Right lobe of liver (tissue), 6 donors: ENCODE measurements at regions of chr11 and their contacts with region 1.

Region 1: DNA sequence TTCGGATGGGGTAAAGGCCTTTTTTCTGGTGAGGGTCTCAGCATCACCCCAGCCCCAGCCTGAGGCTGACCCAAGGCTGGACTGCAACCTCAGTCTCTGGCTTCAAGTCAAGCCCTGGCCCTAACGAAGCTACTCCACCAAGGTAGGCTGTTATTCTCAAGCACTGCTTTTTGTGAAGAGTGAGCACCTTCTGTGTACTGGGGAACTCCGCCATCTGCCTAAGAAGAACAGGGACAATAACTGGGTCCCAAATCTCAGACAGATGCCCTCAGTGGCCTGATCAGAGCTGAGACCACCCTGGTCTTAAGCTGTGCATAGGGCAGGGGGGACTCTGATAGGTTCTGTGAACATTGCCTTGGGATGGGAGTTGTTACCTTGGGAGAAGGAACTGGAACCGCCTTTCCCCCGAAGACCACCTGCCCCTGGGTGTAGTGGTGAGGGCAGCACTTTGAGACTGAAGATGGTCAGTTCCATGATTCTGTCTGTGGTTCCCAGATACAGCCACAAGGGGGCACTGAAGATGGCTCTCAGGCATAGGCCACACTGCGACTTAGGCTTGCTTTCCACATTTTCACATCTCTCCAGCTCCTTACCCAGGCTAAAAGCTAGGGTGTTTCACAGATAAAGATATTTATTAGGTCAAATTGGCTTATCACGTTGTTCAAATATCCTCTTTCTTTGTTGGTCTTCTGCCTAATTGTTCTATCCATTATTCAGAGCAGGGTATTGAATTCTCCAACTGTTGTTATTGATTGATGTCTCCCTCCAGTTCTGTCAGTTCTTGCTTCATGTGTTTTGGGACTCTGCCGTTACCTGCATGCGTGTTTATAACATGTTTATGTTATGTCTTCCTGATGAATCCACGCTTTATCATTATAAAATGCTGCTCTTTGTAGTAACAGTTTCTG is 11.8 kb upstream of the UVRAG start:
- DNase-seq: peak in 2 of 3 donors; percentile 55 to 75
- ATAC-seq: peak; percentile 88 to 96 (median 92)
- H3K4me3 ChIP-seq: no peak overlapping the region
- H3K27ac ChIP-seq: no peak overlapping the region
- H3K4me1 ChIP-seq: no peaks in the 10 kb centered on the region
- H3K27me3 ChIP-seq: no peaks in the 10 kb centered on the region
- CTCF ChIP-seq: peak; percentile 82 to 89 (median 86)
- POLR2A ChIP-seq: no peak

Region 2: GRCh38 chr11:75639762-75640181 is 163.4 kb before region 1 on chr11:
- intact Hi-C with region 1: no loop called
- DNase-seq: peak; percentile 57 to 75 (median 67)
- ATAC-seq: peak; percentile 80 to 90 (median 86)
- H3K4me3 ChIP-seq: no peak overlapping the region
- H3K27ac ChIP-seq: no peak overlapping the region
- H3K4me1 ChIP-seq: no peaks in the 10 kb centered on the region
- H3K27me3 ChIP-seq: no peaks in the 10 kb centered on the region
- CTCF ChIP-seq: no peak
- POLR2A ChIP-seq: no peak

Region 3: GRCh38 chr11:75867775-75868374 is 64.7 kb after region 1 on chr11:
- intact Hi-C with region 1: loop called (anchors 5 to 10 kb)
- DNase-seq: no peak
- ATAC-seq: peak; percentile 79 to 89 (median 86)
- H3K4me3 ChIP-seq: no peak overlapping the region
- H3K27ac ChIP-seq: no peak overlapping the region
- H3K4me1 ChIP-seq: peaks cover 0 to 10% (median 0%) of the 10 kb centered on the region in 4 donors
- H3K27me3 ChIP-seq: no peaks in the 10 kb centered on the region
- CTCF ChIP-seq: peak; percentile 88 to 93 (median 91)
- POLR2A ChIP-seq: no peak